ENCODE measurements at regions of chr3 and their contacts with region 1.

Region 1: DNA sequence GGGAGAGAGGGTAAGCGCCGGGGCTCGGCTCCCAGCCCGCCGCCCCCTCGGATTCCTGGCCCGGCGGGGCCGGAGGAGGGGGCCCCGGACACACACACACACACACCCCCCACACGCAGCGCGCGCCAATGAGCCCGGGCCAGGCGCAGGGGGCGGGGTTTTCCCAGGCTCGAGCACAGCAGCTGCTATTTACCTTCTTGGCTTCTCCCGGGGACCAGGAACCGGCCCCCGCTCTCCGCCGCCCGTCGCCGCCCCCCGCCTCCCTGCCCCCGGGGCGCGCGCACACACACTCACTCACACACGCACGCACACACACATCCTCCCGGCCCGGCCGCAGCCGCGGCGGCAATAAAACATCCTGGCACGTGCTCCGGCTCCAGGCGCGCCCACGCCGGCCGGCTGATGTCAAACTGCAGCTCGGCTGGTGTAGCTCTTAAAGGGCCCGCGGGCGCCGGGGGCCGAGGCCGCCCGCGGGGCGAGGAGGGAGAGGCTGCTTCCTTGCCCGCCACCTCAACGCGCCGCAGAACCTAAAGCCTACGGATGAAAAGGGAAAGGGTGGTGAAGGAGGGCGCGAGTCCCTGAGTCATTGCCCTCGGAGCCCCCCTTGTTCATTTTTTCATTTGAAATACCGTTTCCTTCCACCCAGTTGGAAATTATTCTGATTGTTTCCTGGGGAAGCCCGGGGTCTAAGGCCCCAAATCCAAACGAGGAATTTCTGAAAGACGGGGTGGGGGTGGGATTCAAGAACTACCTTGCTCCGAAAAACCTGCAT is 1.0 kb upstream of the HES1 start:
- DNase-seq: peak; percentile 83 to 88
- H3K4me3 ChIP-seq: peak overlapping the region; percentile 43 to 73 (median 59)
- H3K27ac ChIP-seq: 0 out of 2 replicates have a peak overlapping the region, but pooled peaks have one; percentile 5
- H3K4me1 ChIP-seq: peaks cover 30 to 51% (median 33%) of the 10 kb centered on the region in 4 experiments
- H3K27me3 ChIP-seq: peaks cover 0 to 26% (median 12%) of the 10 kb centered on the region in 4 experiments; a peak in 4 of 7 replicates
- CTCF ChIP-seq: no peak
- EP300 ChIP-seq: no peak
- POLR2A ChIP-seq: no peak
- RAD21 ChIP-seq: peak in 1 of 2 experiments; percentile 11; a peak in 1 of 4 replicates

Region 2: DNA sequence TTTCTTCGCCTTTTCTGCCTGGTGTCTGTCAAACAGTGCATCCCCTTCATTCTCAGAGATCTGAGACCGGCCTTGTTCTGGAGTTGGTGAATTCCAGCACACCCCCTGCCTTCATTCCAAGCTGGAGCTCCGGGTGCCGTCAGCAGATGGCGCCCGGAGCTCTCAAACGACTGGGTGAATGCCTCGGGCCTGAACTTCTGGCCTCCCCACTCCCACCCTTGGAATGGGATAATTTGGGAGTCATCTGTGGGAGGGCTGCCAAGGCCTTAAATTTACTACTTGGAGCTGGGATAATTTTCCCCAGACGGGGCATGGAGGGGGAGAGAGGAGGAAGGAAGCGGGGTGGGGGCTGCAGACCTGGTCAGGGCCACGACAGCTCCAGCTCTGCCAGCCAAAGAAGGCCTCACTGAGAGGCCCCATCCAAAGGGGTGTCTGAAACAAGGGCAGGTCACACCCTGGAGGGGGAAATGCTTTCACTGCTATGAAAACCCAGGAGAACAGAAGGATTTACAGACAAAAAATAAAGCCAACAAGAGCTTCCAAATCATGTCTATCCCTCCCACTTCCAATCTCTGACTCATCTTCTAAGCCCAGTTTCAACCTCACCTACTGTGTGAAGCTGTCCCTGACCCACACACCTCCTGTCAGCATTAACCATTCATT is 354.0 kb before region 1 on chr3:
- CTCF ChIA-PET with region 1: interaction called, 16 read pairs
- POLR2A ChIA-PET with region 1: interaction called, 19 read pairs
- DNase-seq: peak; percentile 50 to 71
- H3K4me3 ChIP-seq: no peak overlapping the region
- H3K27ac ChIP-seq: no peak overlapping the region
- H3K4me1 ChIP-seq: peaks cover 12 to 21% (median 18%) of the 10 kb centered on the region in 4 experiments
- H3K27me3 ChIP-seq: peaks cover 0 to 20% (median 4%) of the 10 kb centered on the region in 4 experiments; a peak in 5 of 7 replicates
- CTCF ChIP-seq: peak; percentile 63 to 88 (median 73)
- EP300 ChIP-seq: no peak
- POLR2A ChIP-seq: no peak
- RAD21 ChIP-seq: peak; percentile 92 to 98

Region 3: GRCh38 chr3:193788189-193788991 is 346.6 kb before region 1 on chr3:
- CTCF ChIA-PET with region 1: interaction called, 10 read pairs
- POLR2A ChIA-PET with region 1: interaction called, 3 read pairs
- DNase-seq: peak in 1 of 2 experiments; percentile 71
- H3K4me3 ChIP-seq: no peak overlapping the region
- H3K27ac ChIP-seq: no peak overlapping the region
- H3K4me1 ChIP-seq: peaks cover 3 to 12% (median 9%) of the 10 kb centered on the region in 4 experiments
- H3K27me3 ChIP-seq: peaks cover 0 to 6% (median 0%) of the 10 kb centered on the region in 4 experiments; a peak in 2 of 7 replicates
- CTCF ChIP-seq: peak; percentile 85 to 96 (median 87)
- EP300 ChIP-seq: no peak
- POLR2A ChIP-seq: no peak
- RAD21 ChIP-seq: peak; percentile 96 to 99

Region 4: DNA sequence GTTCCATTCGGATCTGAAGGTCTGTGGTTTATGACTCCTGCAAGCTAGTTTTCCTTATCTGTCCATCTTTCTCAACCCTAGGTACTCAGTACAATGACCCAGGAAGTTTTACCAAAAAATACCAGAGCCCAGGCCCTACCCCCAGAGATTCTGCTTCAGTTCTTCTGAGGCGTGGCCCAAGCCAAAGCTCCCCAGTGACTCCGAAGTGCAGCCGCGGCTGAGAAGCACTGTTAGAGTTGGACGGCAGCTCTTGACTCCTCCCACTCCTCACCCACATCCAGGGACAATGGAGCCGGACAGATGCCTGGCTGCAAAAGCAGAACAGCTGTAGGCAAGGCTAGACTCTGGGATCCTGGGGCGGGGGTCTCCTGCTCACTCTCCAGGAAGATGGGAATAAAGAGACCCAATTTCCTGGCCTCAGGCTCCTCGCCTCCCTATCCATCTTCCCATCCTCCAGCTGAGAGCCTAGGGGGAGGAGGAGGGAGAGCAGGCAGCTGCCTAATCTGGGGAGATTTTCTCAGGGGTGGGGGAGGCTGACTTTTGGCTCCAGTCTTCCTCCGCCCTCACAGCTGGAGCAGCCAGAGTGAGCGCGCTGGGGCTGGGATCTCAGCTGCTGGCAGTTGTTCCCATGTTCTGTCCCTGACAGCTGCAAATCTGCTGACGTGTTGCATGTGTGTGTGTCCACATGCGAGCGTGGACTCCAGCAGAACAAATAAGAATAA is 318.2 kb before region 1 on chr3:
- CTCF ChIA-PET with region 1: interaction called, 3 read pairs
- POLR2A ChIA-PET with region 1: interaction called, 10 read pairs
- DNase-seq: peak; percentile 51 to 70
- H3K4me3 ChIP-seq: peak overlapping the region in 1 of 4 experiments; percentile 20; a peak in 3 of 8 replicates
- H3K27ac ChIP-seq: no peak overlapping the region
- H3K4me1 ChIP-seq: peaks cover 49 to 62% (median 50%) of the 10 kb centered on the region in 4 experiments
- H3K27me3 ChIP-seq: no peaks in the 10 kb centered on the region
- CTCF ChIP-seq: no peak
- EP300 ChIP-seq: no peak
- POLR2A ChIP-seq: no peak
- RAD21 ChIP-seq: 0 out of 4 replicates have a peak, but pooled peaks of 1 of the 2 experiments have one; percentile 12

Region 5: GRCh38 chr3:194058753-194059152 is 76.2 kb before region 1 on chr3:
- CTCF ChIA-PET with region 1: interaction called, 5 read pairs
- POLR2A ChIA-PET with region 1: interaction called, 10 read pairs
- DNase-seq: no peak
- H3K4me3 ChIP-seq: peak overlapping the region in 2 of 4 experiments; percentile 11 to 54; a peak in 2 of 8 replicates
- H3K27ac ChIP-seq: no peak overlapping the region
- H3K4me1 ChIP-seq: peaks cover 11 to 31% (median 24%) of the 10 kb centered on the region in 4 experiments
- H3K27me3 ChIP-seq: peaks cover 0 to 8% (median 7%) of the 10 kb centered on the region in 4 experiments; a peak in 5 of 7 replicates
- CTCF ChIP-seq: no peak
- EP300 ChIP-seq: no peak
- POLR2A ChIP-seq: no peak
- RAD21 ChIP-seq: no peak

Measured in H1 (cell line).